Activated CD8-positive, alpha-beta T cell treated with anti-CD3 and anti-CD28 coated beads, Interleukin-2, amount 10 ng/mL, durations not matched to agents 7 days and 5 days (primary cell): ENCODE measurements at regions of chr7 and their contacts with region 1.

Region 1: DNA sequence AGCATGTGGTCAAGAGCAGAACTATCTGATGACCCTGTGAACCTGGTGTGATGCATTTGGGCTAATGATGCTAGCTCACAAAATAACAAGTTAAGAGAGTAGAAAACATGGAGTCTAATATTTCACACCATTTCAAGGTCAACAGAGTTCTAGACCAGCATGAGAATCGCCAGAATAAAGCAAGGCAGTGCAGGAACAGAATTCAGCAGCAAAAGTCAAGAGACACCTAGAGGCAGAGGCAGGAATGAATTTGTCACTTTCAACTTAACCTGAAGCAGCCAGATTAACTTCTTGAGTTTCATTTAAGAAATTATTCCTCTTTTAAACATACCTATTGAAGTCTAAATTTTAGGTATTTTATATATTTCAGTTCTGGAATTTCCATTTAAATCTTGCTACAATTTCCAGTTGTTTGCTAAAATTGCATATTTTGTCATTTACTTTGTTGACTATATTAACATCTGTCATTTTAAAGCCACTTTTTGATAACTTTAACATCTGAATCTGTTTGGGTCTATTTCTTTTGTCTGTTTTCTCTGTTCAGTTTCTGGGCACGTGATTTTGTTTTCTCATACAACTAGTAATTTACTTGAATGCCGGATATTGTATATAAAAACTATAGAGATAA is 44.2 kb upstream of the PRSS58 start:
- DNase-seq: no peak
- ATAC-seq: peak; percentile 47
- H3K4me3 Mint-ChIP-seq: no peak overlapping the region
- H3K27ac Mint-ChIP-seq: no peak overlapping the region
- H3K4me1 Mint-ChIP-seq: peaks cover 14% of the 10 kb centered on the region
- H3K27me3 Mint-ChIP-seq: peaks cover 19% of the 10 kb centered on the region

Region 2: DNA sequence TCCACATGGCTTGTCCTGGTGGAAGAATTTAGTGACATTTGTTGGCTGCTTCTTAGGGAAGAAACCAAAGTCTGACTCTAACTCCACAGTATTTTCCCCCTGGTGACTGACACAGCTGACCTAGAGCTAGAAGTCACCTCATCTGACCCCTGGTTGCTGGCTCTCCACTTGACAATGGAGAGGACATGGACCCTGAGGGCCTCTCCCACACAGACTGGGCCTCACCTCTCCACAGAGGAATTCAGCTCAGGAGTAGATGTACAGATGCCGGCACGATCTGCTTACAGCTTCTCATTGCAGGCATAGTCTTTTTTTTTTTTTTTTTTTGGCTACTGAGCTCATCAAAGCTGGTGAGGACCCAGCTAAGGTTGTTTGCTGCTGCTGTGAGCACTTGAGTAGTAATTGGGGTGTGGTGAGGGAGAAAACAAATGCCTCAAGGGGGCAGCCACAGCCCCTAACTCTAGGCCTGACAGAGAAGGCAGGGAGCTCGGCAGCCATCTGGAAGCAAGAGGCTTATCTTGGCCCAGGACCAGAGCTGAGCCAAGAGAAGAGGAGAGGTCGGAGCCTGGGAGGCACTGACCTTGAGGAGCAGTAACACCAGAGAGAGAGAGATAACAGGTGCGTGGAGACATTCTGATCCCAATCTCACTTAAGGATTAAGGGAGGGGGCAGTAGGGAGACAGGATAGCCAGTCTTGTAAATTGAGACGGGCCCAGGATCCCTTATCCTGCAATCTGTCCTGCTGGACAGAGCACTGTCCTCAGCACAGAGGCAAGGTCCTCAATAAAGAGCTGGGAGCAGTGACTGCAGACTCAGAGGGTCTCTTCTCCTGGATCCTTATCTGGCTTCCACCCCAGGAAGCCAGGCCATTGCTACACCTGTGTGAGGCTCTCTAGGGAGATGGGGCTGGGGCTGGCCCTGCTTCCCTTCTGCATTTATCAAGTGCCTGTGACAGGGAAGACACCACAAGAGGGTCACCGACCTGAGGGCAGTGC is 53.6 kb before region 1 on chr7:
- CTCF ChIA-PET with region 1: no interaction called
- POLR2A ChIA-PET with region 1: no interaction called
- DNase-seq: no peak
- ATAC-seq: no peak
- H3K4me3 Mint-ChIP-seq: no peak overlapping the region
- H3K27ac Mint-ChIP-seq: no peak overlapping the region
- H3K4me1 Mint-ChIP-seq: no peaks in the 10 kb centered on the region
- H3K27me3 Mint-ChIP-seq: no peaks in the 10 kb centered on the region

Region 3: DNA sequence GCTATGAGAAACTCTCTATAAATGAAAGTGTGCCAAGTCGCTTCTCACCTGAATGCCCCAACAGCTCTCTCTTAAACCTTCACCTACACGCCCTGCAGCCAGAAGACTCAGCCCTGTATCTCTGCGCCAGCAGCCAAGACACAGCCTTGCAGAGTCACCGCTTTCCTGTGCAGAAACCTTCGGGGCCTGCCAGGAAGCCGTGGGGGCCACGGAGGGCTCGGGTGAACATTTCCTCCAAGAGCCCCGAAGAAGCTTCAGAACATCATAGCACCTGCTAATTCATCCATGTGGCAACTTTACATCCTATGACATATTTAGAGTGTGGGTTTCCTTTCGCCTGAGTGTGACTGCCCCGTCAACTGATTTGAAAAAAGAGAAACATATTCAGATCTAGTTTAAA is 11.5 kb after region 1 on chr7:
- CTCF ChIA-PET with region 1: interaction called, 53 read pairs
- POLR2A ChIA-PET with region 1: no interaction called
- DNase-seq: peak; percentile 45
- ATAC-seq: peak; percentile 77
- H3K4me3 Mint-ChIP-seq: peak overlapping the region; percentile 10
- H3K27ac Mint-ChIP-seq: no peak overlapping the region
- H3K4me1 Mint-ChIP-seq: peaks cover 11% of the 10 kb centered on the region
- H3K27me3 Mint-ChIP-seq: peaks cover 32% of the 10 kb centered on the region

Region 4: GRCh38 chr7:142338633-142339501 is 36.8 kb after region 1 on chr7:
- CTCF ChIA-PET with region 1: interaction called, 13 read pairs
- POLR2A ChIA-PET with region 1: no interaction called
- DNase-seq: no peak
- ATAC-seq: peak; percentile 57
- H3K4me3 Mint-ChIP-seq: no peak overlapping the region
- H3K27ac Mint-ChIP-seq: no peak overlapping the region
- H3K4me1 Mint-ChIP-seq: peaks cover 2% of the 10 kb centered on the region
- H3K27me3 Mint-ChIP-seq: peaks cover 18% of the 10 kb centered on the region

Region 5: GRCh38 chr7:142352543-142352942 is 50.5 kb after region 1 on chr7:
- CTCF ChIA-PET with region 1: interaction called, 15 read pairs
- POLR2A ChIA-PET with region 1: no interaction called
- DNase-seq: no peak
- ATAC-seq: peak; percentile 34
- H3K4me3 Mint-ChIP-seq: peak overlapping the region; percentile 60
- H3K27ac Mint-ChIP-seq: peak overlapping the region; percentile 78
- H3K4me1 Mint-ChIP-seq: peaks cover 30% of the 10 kb centered on the region
- H3K27me3 Mint-ChIP-seq: peaks cover 11% of the 10 kb centered on the region